ENCODE measurements at regions of chr2 and their contacts with region 1.

Region 1: DNA sequence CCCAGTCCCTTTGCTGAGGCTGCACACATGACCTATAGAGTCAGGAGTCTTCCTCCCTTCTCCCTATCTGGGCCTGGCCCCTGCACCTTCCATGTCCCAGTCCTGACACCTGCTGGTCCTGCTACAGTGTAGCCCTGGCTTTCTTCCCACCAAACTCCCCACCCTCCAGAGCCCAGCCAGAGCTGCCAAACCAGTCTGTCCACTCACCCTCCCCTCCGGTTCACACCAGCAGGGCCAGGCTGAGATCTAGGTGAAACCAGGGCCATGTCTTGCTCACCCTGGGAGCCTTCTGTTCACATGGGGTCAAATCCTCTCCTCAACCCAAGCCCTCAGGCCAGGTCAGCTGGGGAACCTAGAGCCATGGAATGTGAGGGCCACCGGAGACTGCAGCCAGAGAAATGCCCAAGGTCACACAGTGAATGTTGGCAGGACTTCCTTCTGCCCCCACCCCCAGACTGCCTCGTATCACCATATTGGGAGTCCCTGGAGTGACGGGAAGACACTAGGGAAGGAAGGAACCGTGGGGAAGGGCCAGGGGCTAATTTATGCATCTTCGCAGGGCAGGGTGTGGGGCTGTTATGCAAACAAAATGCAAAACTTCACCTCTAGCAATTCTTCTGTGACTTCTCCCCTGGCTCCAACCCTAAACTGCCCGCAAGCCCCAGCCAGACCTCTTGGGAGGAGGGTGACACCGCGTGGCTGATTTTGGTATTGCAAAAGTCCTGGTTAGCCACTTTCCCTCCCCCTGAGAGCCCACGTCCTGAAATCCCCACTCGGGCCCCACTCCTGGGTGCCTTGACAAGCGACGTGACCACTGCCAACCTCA is 14.6 kb downstream of the TNS1 start:
- DNase-seq: peak; percentile 98
- H3K4me3 ChIP-seq: peak overlapping the region; percentile 15 to 37 (median 24)
- H3K27ac ChIP-seq: peak overlapping the region; percentile 70 to 77 (median 72)
- H3K4me1 ChIP-seq: peaks cover 29 to 44% (median 36%) of the 10 kb centered on the region in 4 donors
- H3K27me3 ChIP-seq: no peaks in the 10 kb centered on the region
- CTCF ChIP-seq: peak; percentile 86 to 96 (median 91)
- EP300 ChIP-seq: no peak
- POLR2A ChIP-seq: no peak

Region 2: GRCh38 chr2:217785544-217786045 is 202.6 kb before region 1 on chr2:
- intact Hi-C with region 1: loop called (anchors 1 kb)
- DNase-seq: peak; percentile 97
- H3K4me3 ChIP-seq: no peak overlapping the region
- H3K27ac ChIP-seq: peak overlapping the region; percentile 45 to 65 (median 60)
- H3K4me1 ChIP-seq: peaks cover 10 to 35% (median 20%) of the 10 kb centered on the region in 4 donors
- H3K27me3 ChIP-seq: no peaks in the 10 kb centered on the region
- CTCF ChIP-seq: peak; percentile 96 to 99 (median 96)
- EP300 ChIP-seq: no peak
- POLR2A ChIP-seq: no peak

Region 3: DNA sequence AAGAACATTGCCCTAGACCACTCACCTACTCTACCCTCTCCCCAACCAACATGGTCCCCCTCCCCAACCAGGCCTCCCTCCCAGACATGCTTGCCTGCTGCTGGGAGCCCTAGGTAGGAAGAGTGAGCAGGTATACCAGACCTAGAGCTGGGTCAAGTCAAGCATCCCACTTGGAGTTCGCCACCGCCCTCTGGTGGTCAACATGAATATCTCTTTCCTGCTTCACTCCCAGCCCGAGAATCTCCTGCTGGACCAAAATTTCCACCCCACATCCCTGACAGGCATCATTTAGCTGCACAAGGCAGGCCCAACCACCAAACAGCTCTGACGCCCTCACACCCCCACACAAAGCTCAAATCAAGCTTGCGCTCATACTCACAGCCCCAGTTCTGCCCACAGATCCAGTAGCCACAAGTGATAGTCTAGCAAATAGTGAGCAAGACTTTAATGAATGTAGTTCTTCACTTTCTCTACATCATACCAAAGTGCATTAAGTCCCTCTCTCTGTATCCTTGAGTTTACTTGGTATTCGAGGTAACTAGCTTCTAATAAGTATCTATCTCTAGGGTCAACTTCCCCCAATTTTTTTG is 101.4 kb before region 1 on chr2:
- intact Hi-C with region 1: loop called (anchors 5 kb)
- DNase-seq: no peak
- H3K4me3 ChIP-seq: no peak overlapping the region
- H3K27ac ChIP-seq: peak overlapping the region; percentile 89 to 98 (median 97)
- H3K4me1 ChIP-seq: peaks cover 58 to 88% (median 83%) of the 10 kb centered on the region in 4 donors
- H3K27me3 ChIP-seq: no peaks in the 10 kb centered on the region
- CTCF ChIP-seq: peak; percentile 73 to 79 (median 75)
- EP300 ChIP-seq: no peak
- POLR2A ChIP-seq: no peak

Region 4: GRCh38 chr2:217943446-217944389 is 44.5 kb before region 1 on chr2:
- intact Hi-C with region 1: loop called (anchors 2 kb)
- DNase-seq: no peak
- H3K4me3 ChIP-seq: peak overlapping the region; percentile 61 to 89 (median 76)
- H3K27ac ChIP-seq: peak overlapping the region; percentile 89 to 98 (median 97)
- H3K4me1 ChIP-seq: peaks cover 48 to 97% (median 89%) of the 10 kb centered on the region in 4 donors
- H3K27me3 ChIP-seq: no peaks in the 10 kb centered on the region
- CTCF ChIP-seq: peak; percentile 37 to 67 (median 52)
- EP300 ChIP-seq: no peak
- POLR2A ChIP-seq: peak; percentile 93